CD14-positive monocyte (primary cell): ENCODE measurements at regions of chr7 and their contacts with region 1.

Region 1: DNA sequence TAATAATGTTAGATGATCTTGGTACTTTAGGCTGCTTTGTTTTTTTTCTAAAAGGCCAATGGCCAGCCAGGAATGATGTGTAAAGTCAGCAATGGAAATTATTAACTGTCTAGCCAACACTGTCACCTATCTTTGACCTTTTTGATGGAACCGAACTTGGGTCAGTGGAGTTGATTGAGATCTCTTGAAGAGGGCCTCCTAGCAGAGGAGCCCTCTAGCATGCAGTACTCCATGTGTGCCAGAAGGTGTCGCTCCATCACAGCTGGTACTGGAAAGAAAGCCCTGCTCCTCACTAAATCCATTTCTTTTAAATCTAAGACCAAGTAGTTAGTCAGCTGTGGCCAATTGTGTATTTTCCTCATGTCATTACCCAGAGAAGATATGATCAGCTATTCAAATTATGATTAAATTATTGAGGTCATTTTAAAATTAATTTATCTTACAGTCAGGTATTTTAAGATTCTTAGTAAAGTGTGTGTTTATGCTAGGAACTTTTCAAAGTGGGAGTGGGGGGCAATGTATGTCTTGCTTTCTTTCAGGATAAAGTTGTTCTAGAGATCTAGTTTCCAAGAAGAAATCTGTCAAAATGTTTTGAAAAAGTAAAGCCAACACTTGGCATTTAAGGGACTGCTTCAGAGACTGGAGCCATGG is 33.1 kb upstream of the CROT start:
- DNase-seq: peak; percentile 38 to 48 (median 45)
- H3K4me3 ChIP-seq: no peak overlapping the region
- H3K4me3 Mint-ChIP-seq: no peak overlapping the region
- H3K27ac ChIP-seq: no peak overlapping the region
- H3K27ac Mint-ChIP-seq: no peak overlapping the region
- H3K4me1 ChIP-seq: no peaks in the 10 kb centered on the region
- H3K4me1 Mint-ChIP-seq: no peaks in the 10 kb centered on the region
- H3K27me3 ChIP-seq: no peaks in the 10 kb centered on the region
- H3K27me3 Mint-ChIP-seq: peaks cover 1 to 2% (median 2%) of the 10 kb centered on the region in 3 donors
- CTCF ChIP-seq: peak; percentile 96

Region 2: DNA sequence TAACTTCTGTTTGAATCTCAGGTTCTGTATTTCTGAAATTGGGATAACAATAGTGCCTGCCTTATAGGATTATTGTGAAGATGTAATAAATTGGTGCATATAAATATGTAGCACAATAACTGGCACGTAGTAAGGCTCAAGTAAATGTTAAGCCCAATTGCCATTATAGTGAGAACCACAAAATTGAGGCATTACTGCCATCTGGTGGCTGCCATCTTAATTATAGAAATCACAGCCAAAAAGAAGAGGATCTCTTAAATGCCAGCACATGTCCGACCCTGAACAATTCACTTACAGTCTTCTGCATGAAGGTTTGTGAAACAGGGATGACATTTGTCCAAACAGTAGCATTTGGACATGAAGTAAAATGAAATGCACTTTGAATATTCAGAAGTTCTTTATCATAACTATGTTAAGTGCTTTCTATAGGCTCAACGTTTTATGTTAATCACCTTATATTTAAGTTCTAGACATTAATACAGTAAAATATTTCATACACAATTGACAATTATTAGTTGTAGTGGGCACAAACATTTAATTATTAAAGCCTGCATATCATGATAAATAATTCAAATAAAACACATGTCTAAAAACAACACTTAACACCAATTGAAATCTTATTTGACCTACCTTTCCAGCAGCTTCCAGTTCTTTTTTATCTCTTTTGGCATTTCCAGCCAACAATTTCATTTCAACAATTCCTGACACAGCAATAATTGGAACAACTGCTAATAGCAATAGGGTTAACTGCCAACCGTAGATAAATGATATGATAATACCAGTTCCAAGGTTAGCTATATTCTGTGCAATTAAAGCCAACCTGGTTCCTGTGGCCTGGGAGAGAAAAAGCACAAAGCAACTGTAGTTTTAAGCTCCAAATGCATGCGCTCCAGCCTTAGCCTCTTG is 104.6 kb after region 1 on chr7:
- intact Hi-C with region 1: loop called (anchors 2 to 5 kb)
- DNase-seq: peak; percentile 21 to 49 (median 46)
- H3K4me3 ChIP-seq: no peak overlapping the region
- H3K4me3 Mint-ChIP-seq: no peak overlapping the region
- H3K27ac ChIP-seq: no peak overlapping the region
- H3K27ac Mint-ChIP-seq: no peak overlapping the region
- H3K4me1 ChIP-seq: no peaks in the 10 kb centered on the region
- H3K4me1 Mint-ChIP-seq: no peaks in the 10 kb centered on the region
- H3K27me3 ChIP-seq: no peaks in the 10 kb centered on the region
- H3K27me3 Mint-ChIP-seq: no peaks in the 10 kb centered on the region
- CTCF ChIP-seq: peak; percentile 80

Region 3: DNA sequence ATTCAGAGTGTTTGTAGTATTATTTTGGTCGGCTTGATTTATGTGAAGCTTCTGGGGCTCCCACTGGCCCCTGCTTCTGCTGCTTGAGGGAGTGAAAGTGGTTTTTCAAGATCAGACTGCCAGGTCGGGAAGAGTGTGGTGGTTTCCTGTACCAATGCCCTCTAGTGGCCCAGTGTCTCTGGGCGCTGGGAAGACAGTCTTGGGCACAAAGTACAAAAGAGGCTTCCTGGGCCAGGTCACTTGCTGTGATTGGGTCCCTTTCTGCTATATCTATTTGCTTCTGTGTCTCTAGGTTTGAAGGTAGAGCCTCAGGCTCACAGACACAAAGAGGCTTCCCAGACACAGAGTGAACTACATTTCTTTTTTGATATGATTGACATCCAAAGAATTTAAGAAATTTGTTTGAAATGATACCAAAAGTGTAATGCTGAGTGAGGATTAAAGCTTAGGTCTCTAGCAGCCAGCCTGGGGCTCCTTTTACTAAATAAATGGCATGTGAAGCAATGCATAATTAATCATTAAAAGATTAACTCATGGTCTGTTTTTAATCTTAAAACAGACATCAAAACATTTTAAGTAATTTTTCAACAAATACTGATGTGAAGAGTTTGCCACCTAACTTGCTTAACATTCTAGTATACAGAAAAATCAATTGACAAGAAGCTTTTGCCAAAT is 252.1 kb after region 1 on chr7:
- intact Hi-C with region 1: loop called in 1 of 2 experiments (anchors 10 kb)
- DNase-seq: peak in 1 of 3 donors; percentile 4
- H3K4me3 ChIP-seq: no peak overlapping the region
- H3K4me3 Mint-ChIP-seq: peak overlapping the region in 1 of 2 donors; percentile 67
- H3K27ac ChIP-seq: no peak overlapping the region
- H3K27ac Mint-ChIP-seq: no peak overlapping the region
- H3K4me1 ChIP-seq: no peaks in the 10 kb centered on the region
- H3K4me1 Mint-ChIP-seq: peaks cover 4% of the 10 kb centered on the region
- H3K27me3 ChIP-seq: no peaks in the 10 kb centered on the region
- H3K27me3 Mint-ChIP-seq: no peaks in the 10 kb centered on the region
- CTCF ChIP-seq: peak; percentile 44

Region 4: DNA sequence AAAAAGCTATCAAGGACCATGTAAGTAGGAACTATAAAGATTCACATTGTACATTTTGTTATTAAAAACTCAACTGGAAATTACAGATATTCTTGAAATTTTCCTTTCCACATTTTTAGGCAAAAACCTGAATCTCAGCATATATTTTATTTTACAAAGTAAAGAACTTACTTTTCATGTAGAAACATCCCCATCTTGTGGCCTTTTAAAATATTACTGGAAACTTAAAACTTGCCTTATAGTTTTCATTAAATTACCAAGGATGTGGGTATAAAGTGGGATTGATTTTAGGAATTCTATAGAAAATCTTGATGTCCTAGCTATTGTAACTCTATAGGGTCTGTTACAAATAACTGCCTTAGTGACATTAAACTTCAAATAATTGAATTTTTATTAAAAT is 574.5 kb after region 1 on chr7:
- intact Hi-C with region 1: loop called in 1 of 2 experiments (anchors 10 kb)
- DNase-seq: peak in 2 of 3 donors; percentile 32 to 59
- H3K4me3 ChIP-seq: no peak overlapping the region
- H3K4me3 Mint-ChIP-seq: no peak overlapping the region
- H3K27ac ChIP-seq: no peak overlapping the region
- H3K27ac Mint-ChIP-seq: no peak overlapping the region
- H3K4me1 ChIP-seq: no peaks in the 10 kb centered on the region
- H3K4me1 Mint-ChIP-seq: no peaks in the 10 kb centered on the region
- H3K27me3 ChIP-seq: no peaks in the 10 kb centered on the region
- H3K27me3 Mint-ChIP-seq: no peaks in the 10 kb centered on the region
- CTCF ChIP-seq: peak; percentile 73